B cell (primary cell): ENCODE measurements at regions of chr7 and their contacts with region 1.

Region 1: DNA sequence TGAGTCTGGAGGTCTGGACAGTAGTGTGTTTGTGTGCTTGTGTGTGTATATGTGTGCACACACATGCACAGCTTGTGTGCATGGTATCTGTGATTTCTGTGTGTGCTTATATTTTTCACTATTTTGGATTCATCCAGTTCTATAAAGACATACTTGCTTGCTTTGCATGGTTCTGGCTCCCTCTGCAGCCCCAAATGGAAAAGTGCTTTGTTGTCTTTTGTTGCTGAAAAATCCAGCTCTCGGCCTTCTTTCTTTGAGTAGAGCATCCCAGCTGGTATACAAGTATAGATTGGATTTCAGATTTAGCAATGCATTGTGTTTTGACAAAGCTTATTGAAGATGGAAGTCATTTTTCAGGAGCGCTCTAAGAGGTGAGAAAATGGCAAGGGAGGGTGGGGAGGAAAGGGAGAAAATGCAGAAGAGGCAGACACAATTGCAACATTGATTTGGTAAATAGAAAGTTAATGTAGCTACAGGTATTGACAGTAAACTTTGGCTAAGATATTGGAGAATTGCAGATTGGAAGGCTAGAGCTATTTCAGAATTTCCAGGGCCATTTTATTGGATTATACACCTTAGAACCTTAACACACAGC is 333.9 kb downstream of the AUTS2 start:
- DNase-seq: peak; percentile 40
- ATAC-seq: no peak
- H3K4me3 ChIP-seq: no peak overlapping the region
- H3K4me3 Mint-ChIP-seq: no peak overlapping the region
- H3K27ac ChIP-seq: no peak overlapping the region
- H3K27ac Mint-ChIP-seq: no peak overlapping the region
- H3K4me1 ChIP-seq: peaks cover 3 to 7% of the 10 kb centered on the region in 2 donors
- H3K4me1 Mint-ChIP-seq: peaks cover 24% of the 10 kb centered on the region
- H3K27me3 ChIP-seq: no peaks in the 10 kb centered on the region
- H3K27me3 Mint-ChIP-seq: no peaks in the 10 kb centered on the region
- CTCF ChIP-seq: peak; percentile 75

Region 2: GRCh38 chr7:68176974-68177373 is 1755.2 kb before region 1 on chr7:
- CTCF ChIA-PET with region 1: interaction called, 4 read pairs
- POLR2A ChIA-PET with region 1: no interaction called
- intact Hi-C with region 1: loop called (anchors 5 kb)
- DNase-seq: peak; percentile 48
- ATAC-seq: no peak
- H3K4me3 ChIP-seq: no peak overlapping the region
- H3K4me3 Mint-ChIP-seq: no peak overlapping the region
- H3K27ac ChIP-seq: no peak overlapping the region
- H3K27ac Mint-ChIP-seq: no peak overlapping the region
- H3K4me1 ChIP-seq: no peaks in the 10 kb centered on the region
- H3K4me1 Mint-ChIP-seq: no peaks in the 10 kb centered on the region
- H3K27me3 ChIP-seq: no peaks in the 10 kb centered on the region
- H3K27me3 Mint-ChIP-seq: no peaks in the 10 kb centered on the region
- CTCF ChIP-seq: peak; percentile 51

Region 3: GRCh38 chr7:69403169-69403568 is 529.0 kb before region 1 on chr7:
- CTCF ChIA-PET with region 1: no interaction called
- POLR2A ChIA-PET with region 1: no interaction called
- intact Hi-C with region 1: loop called (anchors 5 kb)
- DNase-seq: no peak
- ATAC-seq: no peak
- H3K4me3 ChIP-seq: no peak overlapping the region
- H3K4me3 Mint-ChIP-seq: no peak overlapping the region
- H3K27ac ChIP-seq: no peak overlapping the region
- H3K27ac Mint-ChIP-seq: no peak overlapping the region
- H3K4me1 ChIP-seq: no peaks in the 10 kb centered on the region
- H3K4me1 Mint-ChIP-seq: no peaks in the 10 kb centered on the region
- H3K27me3 ChIP-seq: peaks cover 0 to 2% (median 0%) of the 10 kb centered on the region in 4 experiments
- H3K27me3 Mint-ChIP-seq: peaks cover 3% of the 10 kb centered on the region
- CTCF ChIP-seq: no peak

Region 4: GRCh38 chr7:70693686-70694360 is 761.7 kb after region 1 on chr7:
- CTCF ChIA-PET with region 1: no interaction called
- POLR2A ChIA-PET with region 1: no interaction called
- intact Hi-C with region 1: loop called (anchors 10 kb)
- DNase-seq: peak; percentile 58
- ATAC-seq: peak; percentile 69
- H3K4me3 ChIP-seq: peak overlapping the region in 4 of 5 experiments; percentile 13 to 71 (median 40)
- H3K4me3 Mint-ChIP-seq: peak overlapping the region; percentile 87
- H3K27ac ChIP-seq: no peak overlapping the region
- H3K27ac Mint-ChIP-seq: peak overlapping the region; percentile 60
- H3K4me1 ChIP-seq: peaks cover 15% of the 10 kb centered on the region in 2 donors
- H3K4me1 Mint-ChIP-seq: peaks cover 16% of the 10 kb centered on the region
- H3K27me3 ChIP-seq: peaks cover 0 to 27% (median 12%) of the 10 kb centered on the region in 4 experiments
- H3K27me3 Mint-ChIP-seq: peaks cover 22% of the 10 kb centered on the region
- CTCF ChIP-seq: no peak